ENCODE measurements at regions of chr19 and their contacts with region 1.

Region 1: GRCh38 chr19:49205114-49205513 is 47.5 kb downstream of the TRPM4 start:
- DNase-seq: no peak

Region 2: GRCh38 chr19:49148784-49149651 is 56.1 kb before region 1 on chr19:
- intact Hi-C with region 1: loop called (anchors 5 kb)
- DNase-seq: peak; percentile 73 to 99 (median 89)

Region 3: DNA sequence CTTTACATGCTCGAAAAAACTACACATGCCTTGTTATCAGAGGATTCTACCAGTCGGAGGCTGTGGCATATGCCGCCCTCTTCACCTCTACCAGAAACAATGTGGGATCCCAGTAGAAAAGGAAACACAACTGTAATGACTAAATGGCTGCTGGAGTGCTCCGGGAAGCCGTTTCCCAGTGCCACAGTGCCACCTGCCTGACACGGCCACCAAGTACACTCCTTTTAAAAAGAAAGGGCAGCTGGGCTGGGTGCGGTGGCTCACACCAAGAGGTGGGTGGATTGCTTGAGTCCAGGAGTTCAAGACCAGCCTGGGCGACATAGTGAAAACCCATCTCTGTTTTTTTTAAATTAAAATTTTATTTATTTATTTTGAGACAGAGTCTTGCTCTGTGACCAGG is 19.7 kb after region 1 on chr19:
- intact Hi-C with region 1: no loop called
- DNase-seq: peak in 7 of 10 donors; percentile 12 to 84 (median 36)

Measured in posterior cingulate gyrus (tissue), 11 donors.